ENCODE measurements at regions of chr1 and their contacts with region 1.

Region 1: GRCh38 chr1:23357138-23357908 is 12.3 kb downstream of the ZNF436 start:
- DNase-seq: peak in 1 of 2 experiments; percentile 54
- H3K4me3 ChIP-seq: no peak overlapping the region
- H3K27ac ChIP-seq: no peak overlapping the region
- H3K4me1 ChIP-seq: no peaks in the 10 kb centered on the region
- H3K27me3 ChIP-seq: peaks cover 79 to 99% (median 93%) of the 10 kb centered on the region in 4 experiments
- CTCF ChIP-seq: no peak
- EP300 ChIP-seq: peak in 1 of 2 experiments; percentile 89; a peak in 1 of 3 replicates
- POLR2A ChIP-seq: no peak
- RAD21 ChIP-seq: 0 out of 4 replicates have a peak, but pooled peaks of 1 of the 2 experiments have one; percentile 0

Region 2: DNA sequence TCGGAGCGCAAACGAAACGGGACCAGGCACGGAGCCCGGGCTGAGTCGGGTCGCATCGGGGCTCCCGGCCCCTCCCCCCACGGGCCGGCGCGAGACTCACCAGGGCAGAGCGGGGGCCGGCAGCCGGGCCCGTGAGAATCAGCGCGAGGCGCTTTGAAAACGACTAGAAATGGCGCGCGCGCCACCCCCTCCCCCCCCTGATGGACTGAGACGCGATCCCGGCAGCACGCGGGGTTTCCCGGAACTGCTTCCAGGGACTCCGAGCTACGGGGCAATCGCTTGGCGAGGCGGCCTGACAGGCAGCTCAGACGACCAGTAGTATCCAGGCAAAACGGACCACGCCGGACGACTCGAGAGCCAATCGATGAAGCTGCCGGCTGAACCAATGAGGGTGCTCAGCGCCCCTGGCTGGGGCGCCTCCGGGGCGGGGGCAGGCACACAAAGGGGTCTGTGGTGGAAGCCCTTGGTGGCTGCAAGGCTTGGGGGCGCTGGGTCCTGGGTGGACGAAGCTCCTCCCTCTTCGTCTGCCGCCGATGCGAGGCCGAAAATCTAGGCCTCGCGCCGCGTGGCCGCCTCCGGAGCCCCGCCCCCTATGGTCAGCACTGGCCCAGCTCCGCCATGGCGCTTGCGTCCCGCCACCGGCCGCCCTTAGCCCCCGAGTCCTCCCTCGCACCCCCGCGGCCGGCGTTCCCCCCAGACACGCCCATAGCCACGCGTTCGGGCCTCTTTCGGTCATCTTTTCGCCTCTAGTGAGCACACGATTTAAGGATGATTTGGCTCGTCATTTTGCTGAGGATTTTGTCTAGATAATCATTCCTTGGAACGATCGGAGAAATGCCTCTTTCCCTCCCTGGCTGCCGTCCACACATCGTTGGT is 13.0 kb before region 1 on chr1 and contains the start of gene HNRNPR:
- CTCF ChIA-PET with region 1: interaction called, 3 read pairs
- POLR2A ChIA-PET with region 1: interaction called, 11 read pairs
- DNase-seq: peak; percentile 99 to 100
- H3K4me3 ChIP-seq: peak within 1 kb of the TSS; percentile 87 to 91 (median 90)
- H3K27ac ChIP-seq: peak within 1 kb of the TSS; percentile 85
- H3K4me1 ChIP-seq: peaks cover 0 to 8% (median 3%) of the 10 kb centered on the region in 4 experiments; a peak in 1 of 7 replicates
- H3K27me3 ChIP-seq: peaks cover 2 to 29% (median 15%) of the 10 kb centered on the region in 4 experiments
- CTCF ChIP-seq: no peak
- EP300 ChIP-seq: no peak
- POLR2A ChIP-seq: peak in 1 of 2 experiments; percentile 87; a peak in 2 of 3 replicates
- RAD21 ChIP-seq: no peak
- total RNA-seq, gene HNRNPR: 203 and 214 TPM in 2 replicates

Region 3: GRCh38 chr1:23384302-23385058 is 27.2 kb after region 1 on chr1:
- CTCF ChIA-PET with region 1: no interaction called
- POLR2A ChIA-PET with region 1: no interaction called
- DNase-seq: no peak
- H3K4me3 ChIP-seq: no peak overlapping the region
- H3K27ac ChIP-seq: no peak overlapping the region
- H3K4me1 ChIP-seq: no peaks in the 10 kb centered on the region
- H3K27me3 ChIP-seq: peaks cover 16 to 76% (median 55%) of the 10 kb centered on the region in 4 experiments
- CTCF ChIP-seq: no peak
- EP300 ChIP-seq: no peak
- POLR2A ChIP-seq: no peak
- RAD21 ChIP-seq: no peak